MCF 10A (cell line): ENCODE measurements at regions of chr13 and their contacts with region 1.

Region 1: GRCh38 chr13:75258159-75258782 is 223.7 kb downstream of the TBC1D4 start:
- DNase-seq: peak; percentile 70
- H3K4me3 Mint-ChIP-seq: no peak overlapping the region
- H3K27ac Mint-ChIP-seq: no peak overlapping the region
- H3K4me1 Mint-ChIP-seq: peaks cover 10% of the 10 kb centered on the region
- H3K27me3 Mint-ChIP-seq: no peaks in the 10 kb centered on the region
- CTCF ChIP-seq: peak; percentile 67

Region 2: DNA sequence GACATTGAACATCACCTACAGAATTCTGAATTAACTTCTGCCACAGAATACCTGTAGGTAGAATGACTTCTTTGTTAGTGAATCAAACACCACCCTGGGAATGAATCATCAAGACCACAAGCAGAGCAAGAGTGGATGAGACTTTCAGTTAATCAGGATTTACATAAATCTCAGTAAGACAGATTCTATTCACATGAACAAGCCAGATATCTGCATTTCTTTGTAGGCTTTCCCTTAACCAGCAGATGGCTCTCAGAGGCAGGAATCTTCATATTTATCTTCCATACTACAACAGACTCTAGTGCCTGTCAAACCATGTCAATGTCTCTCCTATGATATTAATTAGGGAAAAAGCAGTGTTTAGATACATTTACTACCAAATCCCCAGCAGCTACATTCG is 1536.2 kb before region 1 on chr13:
- CTCF ChIA-PET with region 1: interaction called, 22 read pairs
- POLR2A ChIA-PET with region 1: interaction called, 4 read pairs
- intact Hi-C with region 1: loop called (anchors 1 kb)
- DNase-seq: peak; percentile 64
- H3K4me3 Mint-ChIP-seq: no peak overlapping the region
- H3K27ac Mint-ChIP-seq: no peak overlapping the region
- H3K4me1 Mint-ChIP-seq: peaks cover 14% of the 10 kb centered on the region
- H3K27me3 Mint-ChIP-seq: no peaks in the 10 kb centered on the region
- CTCF ChIP-seq: peak; percentile 37

Region 3: GRCh38 chr13:73754727-73755292 is 1503.5 kb before region 1 on chr13:
- CTCF ChIA-PET with region 1: interaction called, 22 read pairs
- POLR2A ChIA-PET with region 1: interaction called, 3 read pairs
- intact Hi-C with region 1: loop called (anchors 1 kb)
- DNase-seq: peak; percentile 71
- H3K4me3 Mint-ChIP-seq: no peak overlapping the region
- H3K27ac Mint-ChIP-seq: no peak overlapping the region
- H3K4me1 Mint-ChIP-seq: peaks cover 5% of the 10 kb centered on the region
- H3K27me3 Mint-ChIP-seq: no peaks in the 10 kb centered on the region
- CTCF ChIP-seq: peak; percentile 61

Region 4: GRCh38 chr13:73835138-73835721 is 1423.0 kb before region 1 on chr13:
- CTCF ChIA-PET with region 1: interaction called, 11 read pairs
- POLR2A ChIA-PET with region 1: no interaction called
- intact Hi-C with region 1: loop called (anchors 1 kb)
- DNase-seq: peak; percentile 61
- H3K4me3 Mint-ChIP-seq: no peak overlapping the region
- H3K27ac Mint-ChIP-seq: no peak overlapping the region
- H3K4me1 Mint-ChIP-seq: peaks cover 5% of the 10 kb centered on the region
- H3K27me3 Mint-ChIP-seq: no peaks in the 10 kb centered on the region
- CTCF ChIP-seq: peak; percentile 58

Region 5: GRCh38 chr13:75202981-75203380 is 55.3 kb before region 1 on chr13:
- CTCF ChIA-PET with region 1: no interaction called
- POLR2A ChIA-PET with region 1: no interaction called
- intact Hi-C with region 1: no loop called
- DNase-seq: no peak
- H3K4me3 Mint-ChIP-seq: no peak overlapping the region
- H3K27ac Mint-ChIP-seq: no peak overlapping the region
- H3K4me1 Mint-ChIP-seq: no peaks in the 10 kb centered on the region
- H3K27me3 Mint-ChIP-seq: no peaks in the 10 kb centered on the region
- CTCF ChIP-seq: no peak

Region 6: DNA sequence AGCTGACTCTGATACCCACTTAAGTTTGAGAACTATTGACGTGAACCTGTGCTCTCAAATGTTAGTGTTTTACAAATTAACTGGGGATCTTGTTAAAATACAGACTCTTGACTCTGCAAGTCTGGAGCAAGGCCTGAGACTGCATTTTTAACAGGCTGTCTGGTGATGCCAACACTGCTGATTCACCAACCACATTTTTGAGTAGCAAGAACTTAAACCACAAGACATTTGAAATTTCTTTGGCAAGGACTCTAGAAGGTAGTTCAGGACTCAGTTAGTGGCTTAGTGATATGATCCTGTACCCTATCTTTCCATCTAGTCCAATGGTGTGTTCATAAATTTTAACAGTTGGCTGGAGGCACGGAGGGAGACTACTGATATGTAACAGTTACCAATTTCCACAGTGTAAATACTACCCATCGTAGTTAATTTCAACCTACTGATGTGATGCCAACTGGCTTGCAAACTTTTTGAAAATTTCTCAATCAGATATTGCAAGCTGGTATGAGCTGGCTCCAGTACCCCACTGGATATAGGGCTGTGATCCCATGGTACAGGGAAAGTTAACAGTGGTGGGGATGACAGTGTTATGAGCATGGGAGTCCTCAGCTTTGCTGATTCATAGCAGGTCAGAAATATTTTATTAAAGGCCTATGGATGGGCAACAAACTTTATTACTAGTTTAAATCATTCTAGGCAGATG is 31.4 kb before region 1 on chr13:
- CTCF ChIA-PET with region 1: interaction called, 5 read pairs
- POLR2A ChIA-PET with region 1: interaction called, 27 read pairs
- intact Hi-C with region 1: no loop called
- DNase-seq: peak; percentile 92
- H3K4me3 Mint-ChIP-seq: peak overlapping the region; percentile 64
- H3K27ac Mint-ChIP-seq: peak overlapping the region; percentile 93
- H3K4me1 Mint-ChIP-seq: peaks cover 46% of the 10 kb centered on the region
- H3K27me3 Mint-ChIP-seq: no peaks in the 10 kb centered on the region
- CTCF ChIP-seq: no peak